CD8-positive, alpha-beta T cell (primary cell): ENCODE measurements at regions of chr19 and their contacts with region 1.

Region 1: DNA sequence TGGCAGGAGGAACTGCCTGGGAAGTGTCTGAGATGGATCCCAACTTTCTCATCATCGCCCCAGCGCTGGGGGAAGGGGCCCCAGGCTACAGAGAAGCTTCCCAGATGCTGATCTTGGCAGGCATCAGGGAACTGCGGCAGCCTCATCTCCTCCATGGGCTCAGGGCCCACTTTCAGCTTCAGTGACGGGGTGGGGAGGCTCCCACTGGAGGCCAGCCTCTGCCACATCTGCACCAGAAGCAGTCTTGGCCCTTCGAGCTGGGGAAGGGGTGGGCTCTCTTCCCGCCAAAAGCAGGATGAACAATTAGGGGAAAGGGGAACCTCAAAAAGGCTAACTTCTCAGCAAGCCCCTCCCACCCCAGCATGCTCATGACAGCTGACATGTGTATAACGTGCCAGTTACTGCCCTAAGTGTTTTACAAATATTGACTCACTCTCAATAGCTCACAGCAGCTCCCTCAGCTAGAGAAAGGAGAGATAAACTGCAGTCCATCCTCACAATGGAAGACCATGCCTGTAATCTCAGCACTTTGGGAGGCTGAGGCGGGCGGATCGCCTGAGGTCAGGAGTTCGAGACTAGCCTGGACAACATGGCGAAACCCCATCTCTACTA is 7.1 kb upstream of the S1PR2 start:
- DNase-seq: no peak
- ATAC-seq: no peak
- H3K4me3 ChIP-seq: no peak overlapping the region
- H3K4me3 Mint-ChIP-seq: no peak overlapping the region
- H3K27ac ChIP-seq: no peak overlapping the region
- H3K27ac Mint-ChIP-seq: peak overlapping the region; percentile 60
- H3K4me1 ChIP-seq: peaks cover 18% of the 10 kb centered on the region
- H3K4me1 Mint-ChIP-seq: peaks cover 21% of the 10 kb centered on the region
- H3K27me3 ChIP-seq: no peaks in the 10 kb centered on the region
- H3K27me3 Mint-ChIP-seq: no peaks in the 10 kb centered on the region
- CTCF ChIP-seq: no peak

Region 2: DNA sequence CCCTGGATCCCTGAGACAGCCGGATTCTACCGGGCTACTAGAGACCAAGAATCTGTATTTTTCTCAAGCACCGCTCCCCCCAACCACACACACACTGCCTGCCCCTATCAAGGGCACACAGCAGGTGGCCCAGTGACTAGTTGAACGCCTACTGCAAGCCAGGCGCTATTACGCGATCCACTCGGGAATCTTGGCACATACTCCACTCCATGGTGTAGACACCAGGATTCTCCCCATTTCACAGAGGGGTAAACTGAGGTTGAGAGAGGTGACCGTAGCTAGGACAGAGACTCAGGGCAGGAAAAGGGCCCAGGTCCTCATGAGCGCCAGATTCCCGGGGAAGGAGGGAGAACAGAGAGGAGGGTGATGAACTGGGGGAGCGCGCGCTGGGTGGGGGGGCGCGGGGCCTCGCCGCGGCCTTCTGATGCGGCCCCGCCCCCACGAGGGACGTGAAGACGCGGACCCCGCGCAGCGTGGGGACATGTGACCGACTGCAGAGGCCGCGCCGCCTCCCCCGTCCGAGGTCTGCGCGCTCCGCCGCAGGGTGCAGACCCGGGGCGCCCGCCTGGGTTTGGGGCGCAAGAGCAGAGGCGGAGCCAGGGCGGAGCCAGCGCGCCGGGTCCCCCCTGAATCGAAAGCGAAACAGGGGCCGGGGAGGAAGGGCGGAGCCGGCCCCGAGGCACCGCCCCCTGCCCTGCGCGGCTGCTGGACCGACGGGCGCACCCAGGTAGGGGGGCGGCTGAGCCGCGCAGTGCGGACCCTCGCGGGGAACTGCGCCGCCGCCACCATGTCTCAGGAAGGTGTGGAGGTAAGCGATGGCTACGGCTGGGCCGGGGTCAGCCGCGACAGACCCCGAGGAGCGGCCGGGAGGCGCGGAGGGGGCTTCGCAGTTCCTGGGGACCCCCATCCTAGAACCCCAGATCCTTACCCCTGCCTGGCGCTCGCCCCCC is 152.4 kb before region 1 on chr19 and contains the start of gene SHFL:
- CTCF ChIA-PET with region 1: no interaction called
- POLR2A ChIA-PET with region 1: no interaction called
- intact Hi-C with region 1: loop called in 1 of 2 experiments (anchors 5 kb)
- DNase-seq: peak; percentile 70 to 93 (median 83)
- ATAC-seq: peak; percentile 93
- H3K4me3 ChIP-seq: peak within 1 kb of the TSS; percentile 99 to 100
- H3K4me3 Mint-ChIP-seq: peak within 1 kb of the TSS; percentile 87
- H3K27ac ChIP-seq: peak within 1 kb of the TSS; percentile 73 to 88
- H3K27ac Mint-ChIP-seq: peak within 1 kb of the TSS; percentile 90
- H3K4me1 ChIP-seq: peaks cover 6% of the 10 kb centered on the region
- H3K4me1 Mint-ChIP-seq: peaks cover 10% of the 10 kb centered on the region
- H3K27me3 ChIP-seq: no peaks in the 10 kb centered on the region
- H3K27me3 Mint-ChIP-seq: no peaks in the 10 kb centered on the region
- CTCF ChIP-seq: no peak
- total RNA-seq, gene SHFL: 56.4 to 61.6 TPM